Ovary (tissue), 10 donors: ENCODE measurements at regions of chr4 and their contacts with region 1.

Region 1: GRCh38 chr4:98612318-98613250 is 45.8 kb downstream of the TSPAN5 start:
- DNase-seq: no peak
- H3K4me3 ChIP-seq: no peak overlapping the region
- H3K27ac ChIP-seq: peak overlapping the region; percentile 13 to 54
- H3K4me1 ChIP-seq: peaks cover 39% of the 10 kb centered on the region
- H3K27me3 ChIP-seq: no peaks in the 10 kb centered on the region
- CTCF ChIP-seq: no peak
- EP300 ChIP-seq: no peak
- POLR2A ChIP-seq: no peak

Region 2: DNA sequence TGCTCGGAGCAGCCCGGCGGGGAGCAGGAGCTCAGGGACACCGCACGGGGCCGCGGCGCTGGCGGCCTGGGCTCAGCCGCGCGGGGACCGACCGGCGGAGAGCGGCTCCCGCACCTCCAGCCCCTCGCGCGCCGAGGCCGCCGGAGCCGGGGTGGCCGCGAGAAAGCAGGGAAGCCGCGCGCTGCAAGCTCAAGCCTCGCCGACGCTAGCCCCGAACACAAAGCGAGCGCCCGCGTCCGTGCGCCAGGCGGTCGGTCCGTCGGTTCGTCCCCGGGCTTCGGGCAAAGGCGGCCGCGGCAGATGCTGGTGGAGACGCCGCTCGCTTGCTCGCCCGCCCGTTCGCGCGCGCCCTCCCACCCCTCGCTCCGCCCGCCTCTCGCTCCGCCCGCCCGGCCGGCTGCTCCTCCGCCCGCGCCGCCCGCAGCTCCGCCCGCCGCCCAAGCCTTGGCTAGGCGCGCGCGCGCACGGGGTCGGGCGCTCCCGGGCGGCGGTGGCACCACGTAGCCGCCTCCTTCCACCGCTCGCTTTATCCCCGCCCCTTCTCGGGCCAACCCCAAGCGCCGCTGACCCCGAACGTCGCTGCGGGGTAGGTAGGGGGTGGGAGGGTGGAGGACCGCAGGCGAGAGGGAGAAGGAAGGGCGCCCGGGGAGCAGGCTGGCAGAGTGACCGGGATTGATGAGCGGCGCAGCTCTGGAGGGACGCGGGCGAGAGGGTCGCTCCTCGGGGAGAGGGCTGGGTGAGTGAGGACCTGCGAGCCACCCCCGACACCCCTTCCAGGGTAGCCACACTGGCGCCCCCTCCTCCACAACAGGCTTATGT is 45.9 kb after region 1 on chr4 and contains the start of gene TSPAN5:
- intact Hi-C with region 1: loop called in 1 of 4 experiments (anchors 2 kb)
- DNase-seq: peak; percentile 75 to 86 (median 83)
- H3K4me3 ChIP-seq: peak within 1 kb of the TSS; percentile 84
- H3K27ac ChIP-seq: peak within 1 kb of the TSS; percentile 85 to 88
- H3K4me1 ChIP-seq: peaks cover 13% of the 10 kb centered on the region
- H3K27me3 ChIP-seq: no peaks in the 10 kb centered on the region
- CTCF ChIP-seq: no peak
- EP300 ChIP-seq: no peak
- POLR2A ChIP-seq: no peak
- total RNA-seq, gene TSPAN5: 34.0 to 69.5 (median 48.2) TPM